Heart left ventricle (tissue), 16 donors: ENCODE measurements at regions of chr1 and their contacts with region 1.

Region 1: GRCh38 chr1:170351366-170351946 is 180.5 kb upstream of the GORAB start:
- DNase-seq: no peak
- ATAC-seq: peak in 1 of 4 donors; percentile 43
- H3K4me3 ChIP-seq: no peak overlapping the region
- H3K27ac ChIP-seq: peak overlapping the region in 3 of 12 donors; percentile 6 to 41 (median 22)
- H3K4me1 ChIP-seq: peaks cover 0 to 48% (median 6%) of the 10 kb centered on the region in 12 donors
- H3K27me3 ChIP-seq: no peaks in the 10 kb centered on the region
- CTCF ChIP-seq: no peak
- POLR2A ChIP-seq: no peak

Region 2: DNA sequence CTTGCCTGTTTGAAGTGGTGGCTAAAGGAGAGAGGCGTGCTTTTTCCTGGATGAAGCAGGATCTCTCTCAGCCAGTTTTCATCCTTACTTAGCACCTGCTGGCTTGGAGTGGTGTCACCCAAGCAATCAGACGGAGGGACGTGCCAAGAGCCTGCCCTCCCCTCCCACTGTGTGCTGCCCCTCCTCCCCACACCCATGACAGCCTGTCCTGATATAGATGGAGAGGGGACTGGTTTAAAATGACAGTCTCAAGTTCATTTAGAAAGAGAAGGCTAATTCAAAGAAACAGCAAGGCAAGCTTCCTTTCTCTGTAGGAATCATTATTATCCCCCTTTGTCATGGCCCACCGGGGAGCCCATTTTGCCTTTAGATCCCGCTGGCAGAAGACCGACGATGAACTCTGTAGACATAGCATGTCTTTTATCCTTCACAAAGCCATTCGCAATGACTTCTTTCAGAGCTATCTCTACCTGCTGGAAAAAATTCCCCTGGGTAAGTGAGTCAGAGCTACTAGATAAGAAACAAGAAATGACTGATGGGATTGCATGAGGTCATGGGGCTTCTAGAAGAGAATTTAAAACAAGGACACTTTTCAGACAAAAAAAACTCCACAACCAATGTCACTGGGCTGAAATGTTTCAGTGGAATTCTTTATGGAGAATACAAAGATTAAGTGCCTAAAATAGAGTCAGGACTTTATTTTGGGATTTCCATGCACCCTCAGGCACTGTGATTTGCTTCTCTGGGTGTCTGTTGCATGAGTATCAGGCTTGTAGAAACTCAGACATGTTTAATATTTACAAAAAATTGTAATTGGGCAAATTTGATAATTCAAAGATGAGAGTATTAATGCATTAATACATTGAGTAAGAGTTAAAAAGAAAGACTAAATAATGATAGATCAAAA is 205.4 kb before region 1 on chr1 and contains the start of gene NTMT2:
- intact Hi-C with region 1: loop called in 2 of 10 experiments (anchors 1 to 5 kb)
- DNase-seq: peak; percentile 64 to 83 (median 72)
- ATAC-seq: peak; percentile 93 to 99 (median 97)
- H3K4me3 ChIP-seq: peak within 1 kb of the TSS in 10 of 12 donors; percentile 7 to 49 (median 34)
- H3K27ac ChIP-seq: peak within 1 kb of the TSS; percentile 56 to 97 (median 83)
- H3K4me1 ChIP-seq: peaks cover 0 to 24% (median 5%) of the 10 kb centered on the region in 12 donors
- H3K27me3 ChIP-seq: no peaks in the 10 kb centered on the region
- CTCF ChIP-seq: no peak
- POLR2A ChIP-seq: no peak
- total RNA-seq, gene NTMT2: 0.56 to 3.6 (median 2.0) TPM